A673 (cell line): ENCODE measurements at regions of chr7 and their contacts with region 1.

Region 1: DNA sequence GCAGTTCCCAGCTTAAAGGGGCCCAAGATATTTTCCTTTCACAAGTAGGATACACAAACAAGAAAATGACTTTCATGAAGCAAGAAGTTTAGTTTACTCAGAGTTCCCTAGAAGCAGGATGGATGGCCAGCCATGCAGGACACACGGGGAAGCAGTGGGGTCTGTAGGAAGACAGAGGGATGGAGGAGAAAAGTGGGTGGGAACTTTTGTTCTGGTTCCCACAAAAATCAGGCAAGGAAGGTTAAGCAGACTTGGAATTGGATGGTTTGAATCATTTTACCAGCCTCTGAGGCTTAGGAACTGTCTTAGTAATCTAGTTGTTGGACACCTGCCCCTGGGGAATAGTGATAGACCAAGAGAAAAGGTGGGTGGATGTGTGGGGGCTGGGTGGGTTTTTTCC is 263.3 kb upstream of the VSTM2A start:
- DNase-seq: no peak
- H3K4me3 ChIP-seq: no peak overlapping the region
- H3K27ac ChIP-seq: no peak overlapping the region
- H3K4me1 ChIP-seq: no peaks in the 10 kb centered on the region
- H3K27me3 ChIP-seq: no peaks in the 10 kb centered on the region
- CTCF ChIP-seq: no peak

Region 2: DNA sequence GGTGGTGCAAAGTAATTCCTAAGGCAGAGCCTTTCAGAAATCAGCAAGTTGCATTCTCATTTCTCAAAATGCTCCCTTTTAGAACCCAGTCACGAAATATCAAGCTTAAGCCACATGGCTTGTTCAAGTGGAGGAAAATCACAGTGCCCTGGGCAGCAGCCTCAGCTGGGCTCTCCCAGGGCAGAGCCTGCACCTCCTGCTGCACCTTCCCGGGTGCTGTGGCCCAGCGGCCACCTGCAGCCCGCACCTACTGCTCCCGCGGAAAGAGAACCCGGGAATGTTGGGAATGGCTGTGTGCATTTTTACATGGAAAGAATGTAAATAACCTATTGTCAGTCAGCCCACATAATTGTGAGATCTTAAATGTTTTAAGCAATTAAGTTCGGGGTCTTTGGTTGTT is 133.1 kb before region 1 on chr7:
- CTCF ChIA-PET with region 1: no interaction called
- POLR2A ChIA-PET with region 1: no interaction called
- intact Hi-C with region 1: no loop called
- DNase-seq: no peak
- H3K4me3 ChIP-seq: no peak overlapping the region
- H3K27ac ChIP-seq: no peak overlapping the region
- H3K4me1 ChIP-seq: no peaks in the 10 kb centered on the region
- H3K27me3 ChIP-seq: no peaks in the 10 kb centered on the region
- CTCF ChIP-seq: no peak

Region 3: GRCh38 chr7:54215424-54215823 is 63.4 kb before region 1 on chr7:
- CTCF ChIA-PET with region 1: no interaction called
- POLR2A ChIA-PET with region 1: no interaction called
- intact Hi-C with region 1: loop called (anchors 10 kb)
- DNase-seq: no peak
- H3K4me3 ChIP-seq: no peak overlapping the region
- H3K27ac ChIP-seq: no peak overlapping the region
- H3K4me1 ChIP-seq: no peaks in the 10 kb centered on the region
- H3K27me3 ChIP-seq: no peaks in the 10 kb centered on the region
- CTCF ChIP-seq: no peak

Region 4: DNA sequence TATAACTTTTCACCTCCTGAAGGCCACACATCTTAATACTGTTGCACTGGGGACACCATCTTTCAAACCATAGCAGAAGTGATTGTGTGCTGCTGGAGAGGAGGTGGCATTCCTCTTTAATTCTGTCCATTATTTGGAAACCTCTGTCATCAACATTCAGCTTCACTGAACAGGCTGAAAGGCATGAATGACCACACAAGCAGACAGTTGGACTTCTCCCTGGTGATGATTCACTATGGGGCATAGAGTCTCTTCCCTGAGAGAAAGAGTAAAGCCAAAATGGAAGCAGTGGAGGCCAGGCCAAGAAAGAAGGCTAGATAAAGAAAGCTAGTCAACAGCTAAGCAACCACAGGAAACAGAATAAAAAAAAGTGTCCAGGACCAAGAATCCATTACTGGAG is 150.3 kb after region 1 on chr7:
- CTCF ChIA-PET with region 1: no interaction called
- POLR2A ChIA-PET with region 1: no interaction called
- intact Hi-C with region 1: no loop called
- DNase-seq: no peak
- H3K4me3 ChIP-seq: no peak overlapping the region
- H3K27ac ChIP-seq: no peak overlapping the region
- H3K4me1 ChIP-seq: no peaks in the 10 kb centered on the region
- H3K27me3 ChIP-seq: no peaks in the 10 kb centered on the region
- CTCF ChIP-seq: no peak